ENCODE measurements at regions of chr22 and their contacts with region 1.

Region 1: GRCh38 chr22:22753526-22754267 is 109.3 kb downstream of the GGTLC2 start:
- DNase-seq: peak; percentile 89
- ATAC-seq: peak; percentile 98
- H3K4me3 Mint-ChIP-seq: no peak overlapping the region
- H3K27ac Mint-ChIP-seq: peak overlapping the region; percentile 81
- H3K4me1 Mint-ChIP-seq: peaks cover 51% of the 10 kb centered on the region
- H3K27me3 Mint-ChIP-seq: no peaks in the 10 kb centered on the region
- CTCF ChIP-seq: peak; percentile 92

Region 2: DNA sequence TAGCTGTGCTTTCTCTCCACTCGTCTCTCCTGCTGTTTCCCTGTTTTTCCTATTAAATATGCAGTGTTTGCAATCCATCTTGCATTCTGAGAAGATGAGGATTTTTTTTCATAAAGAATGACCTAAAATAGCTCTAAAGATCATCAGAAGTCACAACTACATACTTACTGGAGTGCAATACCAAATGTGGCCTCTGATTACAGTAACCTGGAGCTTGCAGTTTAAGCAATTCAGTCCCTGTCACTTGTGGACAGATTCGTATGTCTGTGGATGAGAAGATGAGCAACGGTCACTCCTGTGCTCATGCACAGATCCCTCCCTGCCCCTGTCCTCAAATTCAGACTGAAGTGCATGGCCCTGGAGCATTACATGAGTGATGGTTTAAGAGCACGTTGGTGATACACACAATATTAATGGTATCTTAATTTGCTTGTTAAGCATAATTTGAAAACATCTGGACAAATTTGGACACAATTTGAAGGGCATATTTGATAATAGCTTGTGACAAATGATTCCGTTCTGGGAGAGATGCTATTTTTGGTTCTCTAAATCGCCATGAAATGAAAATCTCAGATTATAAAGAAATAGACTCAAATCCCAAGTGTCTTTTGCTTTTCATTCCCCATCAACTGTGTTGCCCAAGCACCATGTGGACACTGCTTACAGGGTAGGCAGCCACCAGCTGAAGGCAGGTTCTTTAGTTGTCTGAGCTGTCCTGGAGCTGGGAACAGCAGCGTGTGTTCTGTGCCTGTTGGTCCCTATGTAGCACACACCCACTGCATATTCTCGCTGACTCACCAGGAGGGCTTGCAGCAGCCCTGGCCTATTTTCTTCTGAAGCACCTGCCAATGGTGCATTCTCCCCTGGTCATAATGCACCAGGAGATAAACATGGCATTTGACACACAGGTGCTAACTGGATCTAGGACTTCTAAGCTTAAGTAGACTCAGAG is 162.1 kb before region 1 on chr22:
- CTCF ChIA-PET with region 1: interaction called, 10 read pairs
- POLR2A ChIA-PET with region 1: no interaction called
- intact Hi-C with region 1: no loop called
- DNase-seq: no peak
- ATAC-seq: no peak
- H3K4me3 Mint-ChIP-seq: no peak overlapping the region
- H3K27ac Mint-ChIP-seq: no peak overlapping the region
- H3K4me1 Mint-ChIP-seq: no peaks in the 10 kb centered on the region
- H3K27me3 Mint-ChIP-seq: peaks cover 7% of the 10 kb centered on the region
- CTCF ChIP-seq: no peak

Region 3: DNA sequence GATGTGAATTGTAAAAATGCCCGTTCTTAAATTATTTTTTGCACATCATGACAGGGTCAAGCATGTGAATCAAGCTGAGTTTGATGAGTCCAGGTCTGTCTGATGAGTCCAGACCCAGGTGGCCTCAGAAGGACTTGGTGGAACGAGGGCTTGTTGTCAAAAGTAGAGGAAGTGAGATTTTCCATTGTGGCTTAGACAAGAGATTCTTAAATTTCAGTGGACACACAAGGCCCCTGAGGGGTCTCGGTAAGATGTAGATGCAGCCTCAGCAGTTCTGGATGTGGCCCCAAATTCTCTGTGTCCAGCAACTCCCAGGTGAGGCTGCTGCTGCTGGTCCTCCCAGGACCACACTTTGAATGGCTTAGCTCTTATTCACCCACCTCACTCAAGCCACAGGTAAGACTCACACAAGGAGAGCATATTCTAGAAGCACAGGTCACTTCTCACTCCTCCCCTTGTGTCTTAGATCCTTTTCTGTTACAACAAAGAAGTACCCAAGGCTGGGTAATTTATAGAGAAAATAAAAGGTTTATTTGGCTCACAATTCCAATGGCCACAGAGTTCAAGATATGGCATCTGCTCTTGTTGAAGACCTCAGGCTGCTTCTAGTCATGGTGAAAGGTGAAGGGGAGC is 10.5 kb before region 1 on chr22:
- CTCF ChIA-PET with region 1: interaction called, 32 read pairs
- POLR2A ChIA-PET with region 1: no interaction called
- intact Hi-C with region 1: no loop called
- DNase-seq: no peak
- ATAC-seq: no peak
- H3K4me3 Mint-ChIP-seq: no peak overlapping the region
- H3K27ac Mint-ChIP-seq: no peak overlapping the region
- H3K4me1 Mint-ChIP-seq: peaks cover 13% of the 10 kb centered on the region
- H3K27me3 Mint-ChIP-seq: peaks cover 7% of the 10 kb centered on the region
- CTCF ChIP-seq: no peak

Region 4: GRCh38 chr22:22787786-22788459 is 34.2 kb after region 1 on chr22:
- CTCF ChIA-PET with region 1: interaction called, 22 read pairs
- POLR2A ChIA-PET with region 1: no interaction called
- intact Hi-C with region 1: no loop called
- DNase-seq: peak; percentile 81
- ATAC-seq: peak; percentile 84
- H3K4me3 Mint-ChIP-seq: no peak overlapping the region
- H3K27ac Mint-ChIP-seq: peak overlapping the region; percentile 46
- H3K4me1 Mint-ChIP-seq: peaks cover 34% of the 10 kb centered on the region
- H3K27me3 Mint-ChIP-seq: no peaks in the 10 kb centered on the region
- CTCF ChIP-seq: peak; percentile 89

Region 5: DNA sequence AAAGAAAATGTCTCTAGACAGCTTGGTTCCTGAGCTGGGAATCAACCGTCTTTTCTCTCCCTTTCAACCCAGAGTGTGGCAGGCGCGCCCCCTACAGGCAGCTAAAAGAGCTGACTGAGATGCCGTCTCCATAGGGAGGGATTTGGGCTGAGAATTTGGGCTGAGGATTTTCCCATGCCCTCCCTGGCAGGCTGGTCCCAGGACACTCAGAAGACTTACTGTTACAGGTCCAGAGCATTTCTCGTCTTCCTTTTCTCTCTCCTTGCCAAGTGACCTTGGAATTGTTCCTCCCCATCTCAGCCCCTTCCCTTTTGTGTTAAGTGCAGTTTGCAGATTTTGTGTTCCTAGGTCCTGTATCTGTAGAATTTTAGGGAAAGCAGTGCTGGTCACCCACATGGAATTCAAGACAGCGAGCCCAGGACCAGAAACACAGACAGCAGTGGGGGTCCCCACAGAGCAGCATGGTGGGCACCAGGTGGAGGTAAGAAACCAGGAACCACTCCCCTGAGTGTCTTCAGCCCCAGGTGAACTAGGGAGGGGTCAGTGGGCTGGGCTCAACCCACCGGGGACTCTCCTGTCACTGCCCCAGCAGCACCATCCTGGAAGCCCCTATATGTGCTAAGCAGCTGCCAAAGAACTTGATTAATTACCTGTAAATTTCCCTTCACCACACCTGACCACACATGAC is 124.0 kb after region 1 on chr22:
- CTCF ChIA-PET with region 1: interaction called, 23 read pairs
- POLR2A ChIA-PET with region 1: no interaction called
- intact Hi-C with region 1: loop called (anchors 5 kb)
- DNase-seq: peak; percentile 77
- ATAC-seq: no peak
- H3K4me3 Mint-ChIP-seq: no peak overlapping the region
- H3K27ac Mint-ChIP-seq: no peak overlapping the region
- H3K4me1 Mint-ChIP-seq: peaks cover 2% of the 10 kb centered on the region
- H3K27me3 Mint-ChIP-seq: no peaks in the 10 kb centered on the region
- CTCF ChIP-seq: peak; percentile 82

Measured in activated CD8-positive, alpha-beta T cell treated with anti-CD3 and anti-CD28 coated beads for 36 hours (primary cell).